GM12878 (cell line): ENCODE measurements at regions of chr22 and their contacts with region 1.

Region 1: GRCh38 chr22:23144932-23145873 is at the start of gene RAB36:
- DNase-seq: peak; percentile 77
- ATAC-seq: peak; percentile 73
- H3K4me3 ChIP-seq: peak within 1 kb of the TSS; percentile 43
- H3K27ac ChIP-seq: no peak within 1 kb of the TSS
- H3K4me1 ChIP-seq: peaks cover 41% of the 10 kb centered on the region
- H3K27me3 ChIP-seq: no peaks in the 10 kb centered on the region
- CTCF ChIP-seq: no peak
- EP300 ChIP-seq: no peak
- POLR2A ChIP-seq: no peak
- RAD21 ChIP-seq: no peak
- polyA plus RNA-seq, gene RAB36: 0.45 to 0.46 TPM

Region 2: DNA sequence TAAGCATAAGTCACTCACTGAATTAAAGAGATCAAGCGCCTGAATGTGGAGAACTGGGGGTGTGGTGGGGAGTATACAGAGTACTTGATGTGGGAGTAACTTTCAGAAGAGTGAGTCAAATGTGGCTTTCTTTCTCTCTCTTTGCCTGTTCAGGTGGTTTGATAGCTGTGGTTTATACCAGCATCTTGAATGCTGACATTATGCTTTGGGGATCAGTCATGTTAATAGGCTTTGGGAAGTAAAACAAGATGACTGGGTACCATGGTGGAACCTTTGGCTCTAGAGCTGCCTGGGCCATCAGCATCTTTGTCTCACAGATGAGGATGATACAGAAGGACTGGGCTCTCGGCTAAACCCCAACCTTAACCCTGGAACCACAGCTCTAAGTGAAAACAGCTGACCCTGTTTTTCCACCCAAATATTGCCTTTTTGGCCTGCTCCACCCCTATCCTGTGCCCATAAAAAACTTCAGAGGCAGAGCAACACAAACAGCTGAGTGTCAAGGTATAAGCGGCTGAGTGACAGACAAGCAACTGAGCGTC is 133.1 kb before region 1 on chr22:
- CTCF ChIA-PET with region 1: no interaction called
- POLR2A ChIA-PET with region 1: interaction called, 12 read pairs
- RAD21 ChIA-PET with region 1: no interaction called
- SMC1A ChIA-PET with region 1: no interaction called
- in situ Hi-C with region 1: no loop called
- intact Hi-C with region 1: no loop called
- DNase-seq: peak; percentile 36
- ATAC-seq: peak; percentile 98
- H3K4me3 ChIP-seq: no peak overlapping the region
- H3K27ac ChIP-seq: no peak overlapping the region
- H3K4me1 ChIP-seq: peaks cover 14% of the 10 kb centered on the region
- H3K27me3 ChIP-seq: 0 out of 4 replicates have a peak, but pooled peaks cover 0 to 3% of the 10 kb centered on the region in 2 experiments
- CTCF ChIP-seq: no peak
- EP300 ChIP-seq: peak in 1 of 2 experiments; percentile 56; a peak in 1 of 4 replicates
- POLR2A ChIP-seq: no peak
- RAD21 ChIP-seq: no peak

Region 3: DNA sequence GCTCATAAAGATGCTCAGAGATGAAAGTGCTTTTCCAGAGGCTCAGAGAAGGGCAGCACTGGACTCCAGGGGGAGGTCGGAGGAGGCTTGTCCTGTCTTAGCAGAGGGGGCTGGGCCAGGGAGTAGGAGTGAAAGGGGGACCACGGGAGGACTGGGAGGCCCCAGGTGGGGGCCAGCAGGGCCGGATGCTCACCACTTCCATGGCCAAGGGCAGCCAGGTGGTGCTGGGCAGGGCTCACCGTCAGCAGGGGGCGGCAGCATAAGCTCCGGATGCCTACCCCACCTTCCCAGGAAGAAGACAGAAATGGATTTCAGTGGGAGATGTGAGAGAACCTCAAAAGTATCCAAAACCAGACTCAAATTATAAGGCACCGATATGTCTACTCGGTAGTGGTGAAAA is 11.1 kb after region 1 on chr22:
- CTCF ChIA-PET with region 1: interaction called, 10 read pairs
- POLR2A ChIA-PET with region 1: interaction called, 9 read pairs
- RAD21 ChIA-PET with region 1: interaction called, 3 read pairs
- SMC1A ChIA-PET with region 1: interaction called, 6 read pairs
- in situ Hi-C with region 1: no loop called
- intact Hi-C with region 1: no loop called
- DNase-seq: no peak
- ATAC-seq: no peak
- H3K4me3 ChIP-seq: no peak overlapping the region
- H3K27ac ChIP-seq: no peak overlapping the region
- H3K4me1 ChIP-seq: peaks cover 12% of the 10 kb centered on the region
- H3K27me3 ChIP-seq: no peaks in the 10 kb centered on the region
- CTCF ChIP-seq: no peak
- EP300 ChIP-seq: no peak
- POLR2A ChIP-seq: no peak
- RAD21 ChIP-seq: no peak

Region 4: DNA sequence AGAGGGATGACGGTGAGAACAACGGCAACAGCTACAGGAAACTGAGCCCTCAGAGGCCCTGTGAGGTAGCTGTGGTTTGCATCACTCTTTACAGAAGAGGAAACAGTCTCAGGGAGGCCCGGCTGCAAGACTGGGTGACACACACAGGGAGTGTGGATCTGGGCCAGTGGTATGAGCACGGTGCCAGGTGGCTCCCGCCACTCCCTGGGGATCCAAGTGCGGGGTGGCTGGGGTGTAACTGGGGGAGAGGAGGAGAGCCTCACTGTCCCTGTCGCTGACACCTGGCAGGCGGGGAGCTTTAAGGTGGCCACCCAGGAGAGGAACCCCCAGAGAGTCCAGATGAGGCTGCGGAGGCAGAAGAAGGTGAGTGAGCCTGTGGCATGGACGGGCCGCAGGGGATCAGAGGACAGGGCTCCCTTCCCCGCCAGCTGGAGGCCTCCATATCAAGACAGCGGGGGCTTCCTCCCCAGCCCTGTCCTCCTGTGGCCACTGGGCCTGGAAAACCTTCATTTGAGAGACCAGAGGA is 551.2 kb after region 1 on chr22:
- CTCF ChIA-PET with region 1: no interaction called
- POLR2A ChIA-PET with region 1: no interaction called
- RAD21 ChIA-PET with region 1: no interaction called
- SMC1A ChIA-PET with region 1: no interaction called
- in situ Hi-C with region 1: no loop called
- intact Hi-C with region 1: no loop called
- DNase-seq: peak; percentile 33
- ATAC-seq: peak; percentile 98
- H3K4me3 ChIP-seq: 0 out of 2 replicates have a peak overlapping the region, but pooled peaks have one; percentile 22
- H3K27ac ChIP-seq: peak overlapping the region; percentile 89
- H3K4me1 ChIP-seq: peaks cover 15% of the 10 kb centered on the region
- H3K27me3 ChIP-seq: no peaks in the 10 kb centered on the region
- CTCF ChIP-seq: no peak
- EP300 ChIP-seq: no peak
- POLR2A ChIP-seq: peak; percentile 71
- RAD21 ChIP-seq: no peak